B cell (primary cell): ENCODE measurements at regions of chr14 and their contacts with region 1.

Region 1: GRCh38 chr14:77067632-77068514 is 30.2 kb upstream of the CIPC start:
- DNase-seq: peak; percentile 69
- ATAC-seq: peak; percentile 66
- H3K4me3 ChIP-seq: no peak overlapping the region
- H3K4me3 Mint-ChIP-seq: no peak overlapping the region
- H3K27ac ChIP-seq: no peak overlapping the region
- H3K27ac Mint-ChIP-seq: no peak overlapping the region
- H3K4me1 ChIP-seq: peaks cover 22 to 32% of the 10 kb centered on the region in 2 donors
- H3K4me1 Mint-ChIP-seq: peaks cover 24% of the 10 kb centered on the region
- H3K27me3 ChIP-seq: peaks cover 0 to 22% (median 3%) of the 10 kb centered on the region in 4 experiments
- H3K27me3 Mint-ChIP-seq: no peaks in the 10 kb centered on the region
- CTCF ChIP-seq: peak; percentile 76

Region 2: DNA sequence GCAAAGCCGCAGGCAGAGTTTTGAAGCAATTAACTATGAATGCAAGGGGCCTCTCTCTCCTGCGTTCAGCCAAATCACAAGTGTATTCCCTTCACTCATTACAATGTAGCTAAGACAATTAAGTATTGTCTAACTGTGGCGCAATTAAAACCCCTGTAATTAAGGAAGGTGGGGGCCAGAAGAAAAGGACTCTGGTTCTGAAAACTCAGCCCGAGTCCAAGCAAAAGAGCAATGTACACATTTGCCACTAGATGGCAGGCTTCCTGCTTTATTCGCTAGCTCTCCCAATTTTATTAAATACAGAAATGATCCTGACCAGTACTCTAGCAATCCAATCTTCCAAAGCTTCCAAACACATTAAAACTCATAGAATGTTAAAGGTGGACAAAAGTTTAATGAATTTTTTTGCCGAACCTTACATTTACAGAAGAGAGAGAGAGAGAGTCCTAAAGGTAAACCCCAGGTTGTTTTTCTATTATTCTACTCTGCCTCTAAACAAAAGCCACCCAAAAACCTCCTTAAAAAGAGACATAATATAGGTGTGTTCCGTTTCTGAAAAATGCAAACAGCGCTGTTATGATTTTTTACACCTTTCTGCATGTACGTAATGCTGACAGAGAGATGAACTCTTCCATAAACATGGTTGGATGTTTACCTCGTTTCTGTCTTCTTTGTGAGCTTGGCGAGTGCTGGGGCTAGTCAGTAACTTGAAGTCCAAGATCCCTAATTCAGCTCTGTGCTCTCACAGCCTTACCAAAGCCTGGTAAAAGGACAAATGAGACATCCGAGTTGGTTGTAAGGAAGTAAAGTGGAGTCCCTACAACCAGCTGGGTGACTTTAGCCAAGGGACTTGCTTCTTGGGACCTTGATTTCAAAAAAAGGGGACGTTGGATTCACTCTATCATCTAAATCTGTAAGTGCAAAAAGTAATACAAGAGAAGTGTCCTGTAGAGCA is 357.5 kb before region 1 on chr14:
- CTCF ChIA-PET with region 1: interaction called, 74 read pairs
- POLR2A ChIA-PET with region 1: no interaction called
- intact Hi-C with region 1: no loop called
- DNase-seq: peak; percentile 49
- ATAC-seq: no peak
- H3K4me3 ChIP-seq: no peak overlapping the region
- H3K4me3 Mint-ChIP-seq: no peak overlapping the region
- H3K27ac ChIP-seq: no peak overlapping the region
- H3K27ac Mint-ChIP-seq: no peak overlapping the region
- H3K4me1 ChIP-seq: peaks cover 0 to under 1% of the 10 kb centered on the region in 2 donors
- H3K4me1 Mint-ChIP-seq: no peaks in the 10 kb centered on the region
- H3K27me3 ChIP-seq: no peaks in the 10 kb centered on the region
- H3K27me3 Mint-ChIP-seq: peaks cover 15% of the 10 kb centered on the region
- CTCF ChIP-seq: peak; percentile 81

Region 3: DNA sequence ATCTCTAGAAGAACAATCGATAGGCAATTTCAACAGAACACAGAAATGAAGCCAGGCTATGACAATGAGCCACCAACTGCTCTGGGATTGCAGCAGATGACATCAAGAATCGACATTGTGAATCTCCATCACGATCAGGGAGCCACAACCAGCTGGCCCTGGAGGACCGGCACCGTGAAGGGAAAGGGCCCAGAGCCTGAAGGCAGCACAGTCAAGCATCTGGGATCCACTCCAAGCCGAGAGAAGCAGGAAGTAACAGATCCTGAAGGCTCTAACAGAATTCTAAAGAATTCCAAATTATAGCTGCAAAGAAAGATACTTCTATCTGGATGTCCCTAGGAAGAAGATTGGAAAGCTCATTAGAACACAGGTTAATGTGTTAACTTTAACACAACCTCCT is 180.7 kb before region 1 on chr14:
- CTCF ChIA-PET with region 1: interaction called, 16 read pairs
- POLR2A ChIA-PET with region 1: no interaction called
- intact Hi-C with region 1: no loop called
- DNase-seq: no peak
- ATAC-seq: no peak
- H3K4me3 ChIP-seq: no peak overlapping the region
- H3K4me3 Mint-ChIP-seq: no peak overlapping the region
- H3K27ac ChIP-seq: no peak overlapping the region
- H3K27ac Mint-ChIP-seq: no peak overlapping the region
- H3K4me1 ChIP-seq: peaks cover 7 to 10% of the 10 kb centered on the region in 2 donors
- H3K4me1 Mint-ChIP-seq: peaks cover 6% of the 10 kb centered on the region
- H3K27me3 ChIP-seq: peaks cover 0 to 4% (median 1%) of the 10 kb centered on the region in 4 experiments
- H3K27me3 Mint-ChIP-seq: peaks cover 14% of the 10 kb centered on the region
- CTCF ChIP-seq: no peak

Region 4: GRCh38 chr14:76947078-76947837 is 120.6 kb before region 1 on chr14:
- CTCF ChIA-PET with region 1: interaction called, 12 read pairs
- POLR2A ChIA-PET with region 1: interaction called, 3 read pairs
- intact Hi-C with region 1: no loop called
- DNase-seq: peak; percentile 90
- ATAC-seq: peak; percentile 95
- H3K4me3 ChIP-seq: peak overlapping the region in 1 of 5 experiments; percentile 24
- H3K4me3 Mint-ChIP-seq: peak overlapping the region; percentile 64
- H3K27ac ChIP-seq: no peak overlapping the region
- H3K27ac Mint-ChIP-seq: peak overlapping the region; percentile 56
- H3K4me1 ChIP-seq: peaks cover 11 to 15% of the 10 kb centered on the region in 2 donors
- H3K4me1 Mint-ChIP-seq: peaks cover 17% of the 10 kb centered on the region
- H3K27me3 ChIP-seq: no peaks in the 10 kb centered on the region
- H3K27me3 Mint-ChIP-seq: no peaks in the 10 kb centered on the region
- CTCF ChIP-seq: peak; percentile 67

Region 5: GRCh38 chr14:77053046-77053841 is 14.6 kb before region 1 on chr14:
- CTCF ChIA-PET with region 1: interaction called, 48 read pairs
- POLR2A ChIA-PET with region 1: no interaction called
- intact Hi-C with region 1: loop called (anchors 1 kb)
- DNase-seq: peak; percentile 89
- ATAC-seq: peak; percentile 94
- H3K4me3 ChIP-seq: no peak overlapping the region
- H3K4me3 Mint-ChIP-seq: no peak overlapping the region
- H3K27ac ChIP-seq: no peak overlapping the region
- H3K27ac Mint-ChIP-seq: no peak overlapping the region
- H3K4me1 ChIP-seq: peaks cover 11 to 15% of the 10 kb centered on the region in 2 donors
- H3K4me1 Mint-ChIP-seq: peaks cover 7% of the 10 kb centered on the region
- H3K27me3 ChIP-seq: no peaks in the 10 kb centered on the region
- H3K27me3 Mint-ChIP-seq: no peaks in the 10 kb centered on the region
- CTCF ChIP-seq: peak; percentile 95

Region 6: DNA sequence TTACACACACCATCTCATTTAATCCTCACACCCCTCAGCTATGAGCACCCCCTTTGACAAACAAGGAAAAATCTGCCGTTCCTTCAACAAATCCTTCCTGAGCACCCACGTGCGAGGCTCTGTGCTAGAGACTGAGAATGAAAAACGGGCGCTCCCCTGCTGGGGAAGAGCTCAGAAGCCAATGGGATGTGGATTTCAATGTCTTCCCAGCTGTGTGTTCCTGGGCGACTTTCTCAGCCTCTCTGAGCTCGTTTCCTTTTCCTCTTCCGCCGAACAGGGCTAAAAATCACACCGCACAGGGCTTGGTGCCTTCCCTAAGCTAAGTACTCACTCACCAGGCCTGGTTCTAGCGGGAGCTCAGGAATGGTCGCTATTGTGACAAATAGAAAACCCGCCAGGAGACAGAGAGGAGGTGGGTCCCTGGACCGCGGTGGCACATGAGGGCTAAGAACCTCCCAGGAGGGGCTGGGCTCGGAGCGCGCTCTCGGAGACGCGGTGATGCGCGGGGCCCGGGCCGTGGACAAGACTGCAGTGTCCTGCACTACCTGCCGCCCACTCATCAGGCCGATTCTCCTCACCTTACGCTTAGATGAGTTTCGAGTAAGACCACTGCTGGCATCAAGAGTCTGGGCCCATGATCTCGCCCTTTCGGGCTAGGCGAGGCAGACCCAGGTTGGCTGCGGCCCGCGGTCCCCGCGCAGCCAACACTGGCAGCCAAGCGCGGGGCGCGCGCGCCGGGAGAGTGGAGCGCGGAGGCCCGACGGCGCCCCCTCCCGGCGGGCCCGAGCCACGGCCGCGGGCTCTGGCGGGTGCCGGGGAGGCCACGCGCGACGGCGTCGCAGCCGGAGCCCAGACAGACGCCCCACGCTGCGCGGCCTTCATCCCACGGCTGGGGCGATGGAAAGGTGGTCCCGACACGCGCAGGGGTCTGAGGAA is 56.7 kb after region 1 on chr14:
- CTCF ChIA-PET with region 1: interaction called, 126 read pairs
- POLR2A ChIA-PET with region 1: interaction called, 6 read pairs
- intact Hi-C with region 1: loop called (anchors 1 kb)
- DNase-seq: peak; percentile 89
- ATAC-seq: peak; percentile 42
- H3K4me3 ChIP-seq: peak overlapping the region; percentile 32 to 79 (median 73)
- H3K4me3 Mint-ChIP-seq: peak overlapping the region; percentile 93
- H3K27ac ChIP-seq: peak overlapping the region; percentile 39 to 93
- H3K27ac Mint-ChIP-seq: peak overlapping the region; percentile 94
- H3K4me1 ChIP-seq: peaks cover 54 to 60% of the 10 kb centered on the region in 2 donors
- H3K4me1 Mint-ChIP-seq: peaks cover 59% of the 10 kb centered on the region
- H3K27me3 ChIP-seq: peaks cover 0 to 28% (median 4%) of the 10 kb centered on the region in 4 experiments
- H3K27me3 Mint-ChIP-seq: peaks cover 12% of the 10 kb centered on the region
- CTCF ChIP-seq: peak; percentile 78